ENCODE measurements at regions of chr5 and their contacts with region 1.

Region 1: GRCh38 chr5:57662991-57663390 is 180.4 kb upstream of the ACTBL2 start:
- DNase-seq: peak in 3 of 5 donors; percentile 32 to 60 (median 43)
- ATAC-seq: peak; percentile 81 to 94 (median 92)
- H3K4me3 ChIP-seq: no peak overlapping the region
- H3K27ac ChIP-seq: peak overlapping the region; percentile 6 to 85 (median 64)
- H3K4me1 ChIP-seq: peaks cover 0 to 27% (median 5%) of the 10 kb centered on the region in 12 donors
- H3K27me3 ChIP-seq: no peaks in the 10 kb centered on the region
- CTCF ChIP-seq: peak in 3 of 12 donors; percentile 7 to 34 (median 25)
- POLR2A ChIP-seq: no peak

Region 2: GRCh38 chr5:56440871-56441740 is 1221.9 kb before region 1 on chr5:
- intact Hi-C with region 1: no loop called
- DNase-seq: no peak
- ATAC-seq: peak; percentile 55 to 91 (median 76)
- H3K4me3 ChIP-seq: no peak overlapping the region
- H3K27ac ChIP-seq: no peak overlapping the region
- H3K4me1 ChIP-seq: peaks cover 0 to 9% (median 0%) of the 10 kb centered on the region in 12 donors
- H3K27me3 ChIP-seq: no peaks in the 10 kb centered on the region
- CTCF ChIP-seq: no peak
- POLR2A ChIP-seq: no peak

Region 3: GRCh38 chr5:57505272-57506200 is 157.5 kb before region 1 on chr5:
- intact Hi-C with region 1: loop called in 6 of 10 experiments (anchors 5 to 10 kb)
- DNase-seq: no peak
- ATAC-seq: peak in 2 of 4 donors; percentile 48 to 49
- H3K4me3 ChIP-seq: no peak overlapping the region
- H3K27ac ChIP-seq: peak overlapping the region in 1 of 12 donors; percentile 5
- H3K4me1 ChIP-seq: peaks cover 0 to 39% (median 9%) of the 10 kb centered on the region in 12 donors
- H3K27me3 ChIP-seq: no peaks in the 10 kb centered on the region
- CTCF ChIP-seq: no peak
- POLR2A ChIP-seq: no peak

Region 4: GRCh38 chr5:57626703-57627102 is 36.3 kb before region 1 on chr5:
- intact Hi-C with region 1: no loop called
- DNase-seq: no peak
- ATAC-seq: no peak
- H3K4me3 ChIP-seq: no peak overlapping the region
- H3K27ac ChIP-seq: no peak overlapping the region
- H3K4me1 ChIP-seq: no peaks in the 10 kb centered on the region
- H3K27me3 ChIP-seq: no peaks in the 10 kb centered on the region
- CTCF ChIP-seq: no peak
- POLR2A ChIP-seq: no peak

Region 5: DNA sequence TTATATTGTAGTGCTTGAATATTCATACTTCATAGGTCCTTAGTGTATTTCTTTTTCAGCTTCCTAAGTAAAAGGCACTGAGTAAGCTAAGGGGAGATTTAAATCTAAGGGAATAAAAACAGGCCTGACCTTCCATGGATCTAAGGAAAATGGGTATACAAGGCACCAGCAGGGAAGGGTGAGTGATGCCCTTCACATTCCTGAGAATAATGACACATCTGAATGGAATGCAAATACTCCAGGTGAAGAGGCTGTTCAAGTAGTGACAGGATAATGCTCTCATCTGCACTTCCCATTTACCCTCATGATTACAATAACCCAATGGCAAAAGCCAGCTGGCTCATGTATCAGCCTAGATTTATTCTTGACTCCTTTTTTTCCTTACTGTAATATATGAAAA is 35.8 kb after region 1 on chr5:
- intact Hi-C with region 1: loop called in 4 of 10 experiments (anchors 2 to 5 kb)
- DNase-seq: no peak
- ATAC-seq: no peak
- H3K4me3 ChIP-seq: no peak overlapping the region
- H3K27ac ChIP-seq: peak overlapping the region in 11 of 12 donors; percentile 19 to 88 (median 76)
- H3K4me1 ChIP-seq: peaks cover 2 to 55% (median 30%) of the 10 kb centered on the region in 12 donors
- H3K27me3 ChIP-seq: no peaks in the 10 kb centered on the region
- CTCF ChIP-seq: no peak
- POLR2A ChIP-seq: no peak

Region 6: DNA sequence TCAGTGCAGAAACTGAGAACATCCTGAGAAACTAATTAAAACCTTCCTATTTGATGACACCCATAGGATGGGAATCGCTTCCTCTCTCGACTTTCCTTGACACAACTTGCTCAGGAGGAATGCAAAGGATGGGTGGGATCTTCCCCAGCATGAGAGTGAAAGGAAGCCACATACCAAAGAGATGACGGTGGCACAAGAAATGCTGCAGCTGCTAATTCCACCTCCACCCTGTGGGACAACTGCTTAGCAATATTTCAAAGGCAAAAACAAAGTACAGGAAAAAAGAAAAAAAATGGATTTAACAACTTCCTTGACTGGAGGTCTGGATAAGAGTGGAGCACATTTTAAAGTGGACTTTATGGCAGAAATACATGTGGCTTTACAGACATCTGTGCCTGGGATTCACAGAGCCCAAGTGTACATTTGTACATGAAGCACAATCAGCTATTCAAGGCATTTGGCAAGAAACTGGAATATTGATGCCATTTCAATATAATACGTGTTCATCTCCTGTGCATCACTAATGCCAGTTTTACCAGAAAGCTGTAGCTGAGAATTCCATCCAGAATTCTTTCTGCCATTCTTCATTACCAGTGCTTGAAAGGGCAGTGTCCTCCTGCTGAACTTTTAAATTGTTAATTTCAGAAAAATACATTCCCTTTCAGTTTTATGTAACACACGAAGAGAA is 178.8 kb after region 1 on chr5:
- intact Hi-C with region 1: loop called in 1 of 10 experiments (anchors 10 kb)
- DNase-seq: peak in 3 of 5 donors; percentile 25 to 32 (median 28)
- ATAC-seq: peak in 3 of 4 donors; percentile 61 to 85 (median 76)
- H3K4me3 ChIP-seq: no peak overlapping the region
- H3K27ac ChIP-seq: peak overlapping the region in 8 of 12 donors; percentile 8 to 56 (median 36)
- H3K4me1 ChIP-seq: peaks cover 0 to 38% (median 18%) of the 10 kb centered on the region in 12 donors
- H3K27me3 ChIP-seq: no peaks in the 10 kb centered on the region
- CTCF ChIP-seq: no peak
- POLR2A ChIP-seq: no peak

Region 7: DNA sequence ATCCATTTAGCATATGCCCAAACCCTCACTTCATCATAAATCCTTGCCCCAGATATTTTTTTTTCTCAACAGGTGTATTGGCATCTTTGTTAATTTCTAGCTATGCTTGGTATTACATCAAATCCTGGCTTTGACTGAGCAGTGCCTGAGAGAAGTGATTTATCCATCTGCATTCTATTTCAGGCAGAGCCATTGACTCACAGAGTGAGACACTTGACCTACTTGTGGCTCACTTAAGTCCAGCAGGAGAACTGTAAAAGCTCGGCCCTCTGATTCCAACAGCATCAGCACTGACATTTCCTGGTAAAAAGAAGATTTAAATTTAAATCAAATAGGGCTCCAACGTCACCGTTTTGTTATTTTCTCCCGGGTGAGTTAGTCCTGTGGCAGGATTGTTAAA is 703.5 kb after region 1 on chr5:
- intact Hi-C with region 1: loop called in 1 of 10 experiments (anchors 10 kb)
- DNase-seq: peak in 1 of 5 donors; percentile 26
- ATAC-seq: peak; percentile 82 to 96 (median 91)
- H3K4me3 ChIP-seq: no peak overlapping the region
- H3K27ac ChIP-seq: peak overlapping the region in 9 of 12 donors; percentile 4 to 76 (median 55)
- H3K4me1 ChIP-seq: peaks cover 0 to 17% (median 0%) of the 10 kb centered on the region in 12 donors
- H3K27me3 ChIP-seq: no peaks in the 10 kb centered on the region
- CTCF ChIP-seq: no peak
- POLR2A ChIP-seq: no peak

Measured in heart left ventricle (tissue), 16 donors.